ENCODE measurements at regions of chr7 and their contacts with region 1.

Region 1: DNA sequence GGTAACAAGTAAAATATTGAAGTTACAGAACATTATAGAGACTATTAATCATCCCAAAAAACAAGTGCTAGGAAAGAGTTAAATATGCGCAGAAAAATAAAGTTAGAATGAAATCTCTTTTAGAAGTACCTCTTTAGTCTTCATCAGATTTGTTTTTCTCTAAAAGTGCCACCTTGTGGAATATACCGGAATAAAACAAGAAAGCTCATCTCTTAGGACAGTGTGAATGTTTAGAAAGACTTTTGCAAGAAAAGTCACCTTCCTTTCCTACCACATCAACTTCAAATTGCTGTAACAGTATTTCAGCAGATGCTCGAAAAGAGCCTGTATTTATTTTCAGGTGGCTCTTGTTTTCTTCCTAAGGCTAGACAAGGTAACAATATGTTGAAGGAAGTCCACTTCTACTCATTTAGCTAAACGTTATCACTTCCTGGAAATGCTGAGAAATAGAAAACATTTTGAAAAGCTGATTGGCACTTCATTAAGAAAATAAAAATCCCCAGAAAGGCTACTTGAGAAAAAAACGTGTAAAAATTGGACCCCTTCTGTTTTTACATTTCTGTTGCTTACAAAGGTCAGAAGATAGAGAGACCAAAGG is 19.8 kb upstream of the FAM133B start:
- DNase-seq: no peak
- ATAC-seq: peak; percentile 65
- H3K4me3 Mint-ChIP-seq: no peak overlapping the region
- H3K27ac Mint-ChIP-seq: peak overlapping the region; percentile 56
- H3K4me1 Mint-ChIP-seq: peaks cover 23% of the 10 kb centered on the region
- H3K27me3 Mint-ChIP-seq: no peaks in the 10 kb centered on the region
- CTCF ChIP-seq: peak; percentile 43

Region 2: GRCh38 chr7:92404170-92404614 is 205.8 kb before region 1 on chr7:
- CTCF ChIA-PET with region 1: no interaction called
- POLR2A ChIA-PET with region 1: no interaction called
- intact Hi-C with region 1: no loop called
- DNase-seq: peak; percentile 82
- ATAC-seq: peak; percentile 84
- H3K4me3 Mint-ChIP-seq: no peak overlapping the region
- H3K27ac Mint-ChIP-seq: peak overlapping the region; percentile 5
- H3K4me1 Mint-ChIP-seq: peaks cover 17% of the 10 kb centered on the region
- H3K27me3 Mint-ChIP-seq: no peaks in the 10 kb centered on the region
- CTCF ChIP-seq: no peak

Region 3: DNA sequence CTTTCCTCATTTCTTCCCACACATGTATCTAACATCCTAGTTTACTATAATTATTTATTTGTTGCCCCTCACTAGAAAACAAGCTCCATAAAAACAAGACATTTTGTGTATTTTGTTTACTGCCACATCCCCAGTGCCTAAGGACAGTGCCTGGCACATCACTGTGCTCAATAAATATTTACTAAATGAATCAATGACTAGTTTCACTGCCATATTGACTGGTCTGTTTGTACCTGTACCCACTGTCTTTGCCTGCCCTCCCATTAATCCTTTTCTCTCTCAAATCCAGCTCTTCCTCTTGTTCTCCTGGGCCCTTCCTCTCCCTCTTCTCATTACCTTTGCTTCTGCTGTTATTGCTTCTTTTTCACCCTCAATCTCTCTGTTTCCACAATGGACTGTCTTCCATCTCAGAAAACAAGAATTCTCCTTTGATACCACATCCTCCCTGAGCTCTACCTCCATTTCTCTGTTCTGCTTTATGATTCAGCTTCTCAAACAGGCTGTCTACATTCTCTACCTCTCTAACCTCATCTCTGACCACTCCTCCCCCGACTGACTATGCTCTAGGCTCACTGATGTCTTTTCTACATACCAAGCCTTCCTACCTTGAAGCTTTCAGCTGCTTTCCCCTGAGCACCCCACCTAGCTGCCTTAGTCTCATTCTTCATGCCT is 11.6 kb before region 1 on chr7:
- CTCF ChIA-PET with region 1: interaction called, 14 read pairs
- POLR2A ChIA-PET with region 1: no interaction called
- intact Hi-C with region 1: no loop called
- DNase-seq: peak; percentile 33
- ATAC-seq: peak; percentile 79
- H3K4me3 Mint-ChIP-seq: no peak overlapping the region
- H3K27ac Mint-ChIP-seq: no peak overlapping the region
- H3K4me1 Mint-ChIP-seq: peaks cover 2% of the 10 kb centered on the region
- H3K27me3 Mint-ChIP-seq: peaks cover under 1% of the 10 kb centered on the region
- CTCF ChIP-seq: no peak